WTC11 (cell line): ENCODE measurements at regions of chr9 and their contacts with region 1.

Region 1: DNA sequence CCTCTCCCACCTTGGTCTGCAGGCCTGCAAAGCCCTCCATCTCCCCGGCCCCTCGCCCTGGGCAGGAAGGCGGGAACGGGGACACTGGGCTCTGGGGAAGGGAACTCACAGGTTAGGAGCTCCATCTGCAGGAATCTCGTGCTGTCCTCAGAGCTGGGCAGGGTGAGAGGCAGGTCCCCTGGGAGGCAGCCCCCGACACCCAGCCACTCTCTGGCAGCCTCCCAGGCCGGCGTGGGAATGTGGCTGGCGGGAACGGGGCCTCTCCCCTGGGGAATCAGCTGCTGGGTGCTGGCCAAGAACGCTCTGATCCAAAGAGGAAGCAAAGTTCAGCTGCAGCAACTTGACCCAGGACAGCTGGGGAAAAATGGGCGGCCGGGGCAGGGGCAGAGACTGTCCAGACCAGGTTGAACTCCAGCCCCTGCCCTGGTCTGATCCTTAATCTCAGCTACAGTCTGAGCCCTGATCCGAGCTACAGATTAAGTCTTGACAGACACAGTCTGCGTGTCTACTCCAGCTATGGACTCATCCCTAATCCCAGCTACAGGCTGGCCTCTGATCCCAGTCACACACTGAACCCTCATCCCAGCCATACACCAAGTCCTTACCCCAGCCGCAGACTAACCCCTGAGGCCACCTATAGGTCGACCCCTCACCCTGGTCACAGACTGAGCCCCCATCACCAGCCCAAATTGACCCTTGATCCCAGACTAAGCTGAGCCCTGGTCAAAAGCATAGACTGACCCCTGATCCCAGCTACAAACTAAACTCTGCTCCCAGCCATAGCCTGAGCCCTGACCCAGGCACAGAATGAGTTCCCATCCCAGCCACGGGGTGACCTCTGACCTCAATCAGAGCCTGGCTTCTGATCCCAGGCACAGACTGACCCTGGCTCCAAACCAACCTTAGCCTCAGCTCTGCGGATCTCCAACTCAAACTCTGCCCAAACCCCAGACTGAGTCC is 37.3 kb upstream of the EGFL7 start:
- DNase-seq: no peak
- ATAC-seq: peak; percentile 43
- H3K4me3 Mint-ChIP-seq: no peak overlapping the region
- H3K27ac Mint-ChIP-seq: no peak overlapping the region
- H3K4me1 Mint-ChIP-seq: no peaks in the 10 kb centered on the region
- H3K27me3 Mint-ChIP-seq: no peaks in the 10 kb centered on the region
- CTCF ChIP-seq: no peak

Region 2: DNA sequence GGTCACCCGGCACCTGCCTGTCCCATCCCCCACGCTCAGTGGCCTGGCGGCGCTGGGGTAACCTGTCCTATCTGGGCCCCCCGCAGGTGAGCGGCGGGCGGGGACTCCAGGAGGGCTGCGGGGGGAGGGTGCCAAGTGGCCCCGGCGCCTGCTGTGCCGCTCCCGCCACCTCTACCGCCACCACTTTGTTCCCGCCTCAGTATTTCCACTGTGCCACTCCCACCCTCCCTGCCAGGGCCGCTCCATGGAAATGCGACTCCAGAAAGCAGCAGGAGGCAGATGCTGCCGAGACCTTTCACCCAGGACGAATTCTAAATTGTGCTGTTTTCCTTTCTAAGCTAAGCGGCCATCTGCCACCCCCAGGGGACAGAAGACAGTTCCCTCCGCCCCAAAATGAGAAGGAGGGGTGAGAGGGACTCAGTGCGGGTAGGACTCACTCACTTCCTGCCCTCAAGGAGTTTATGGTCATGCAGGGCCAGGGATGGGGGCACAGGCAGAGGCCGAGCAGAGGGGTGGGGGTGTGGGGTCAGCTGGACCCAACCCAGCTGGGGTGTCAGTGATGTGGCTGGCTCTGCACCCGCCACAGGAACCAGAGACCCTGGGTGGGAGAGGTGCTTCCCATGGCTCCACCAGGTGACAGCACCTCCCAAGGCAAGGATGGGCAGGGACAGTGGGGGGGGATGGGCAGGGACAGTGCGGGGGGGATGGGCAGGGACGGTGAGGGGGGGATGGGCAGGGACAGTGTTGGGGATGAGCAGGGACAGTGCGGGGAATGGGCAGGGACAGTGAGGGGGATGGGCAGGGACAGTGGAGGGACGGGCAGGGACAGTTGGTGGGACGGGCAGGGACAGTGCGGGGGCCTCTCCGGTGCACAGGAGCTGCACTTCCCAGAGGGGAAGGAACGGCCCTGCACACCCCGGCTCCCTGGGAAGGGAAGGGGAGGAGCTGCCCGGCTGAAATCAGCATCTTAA is 97.4 kb before region 1 on chr9:
- CTCF ChIA-PET with region 1: interaction called, 12 read pairs
- POLR2A ChIA-PET with region 1: no interaction called
- DNase-seq: no peak
- ATAC-seq: no peak
- H3K4me3 Mint-ChIP-seq: no peak overlapping the region
- H3K27ac Mint-ChIP-seq: peak overlapping the region; percentile 76; the same call in 1 of the 2 replicates
- H3K4me1 Mint-ChIP-seq: peaks cover 21% of the 10 kb centered on the region
- H3K27me3 Mint-ChIP-seq: no peaks in the 10 kb centered on the region
- CTCF ChIP-seq: no peak

Region 3: GRCh38 chr9:136539427-136540421 is 85.7 kb before region 1 on chr9:
- CTCF ChIA-PET with region 1: interaction called, 13 read pairs
- POLR2A ChIA-PET with region 1: no interaction called
- DNase-seq: peak; percentile 64
- ATAC-seq: peak; percentile 46
- H3K4me3 Mint-ChIP-seq: no peak overlapping the region
- H3K27ac Mint-ChIP-seq: peak overlapping the region; percentile 91
- H3K4me1 Mint-ChIP-seq: peaks cover 25% of the 10 kb centered on the region
- H3K27me3 Mint-ChIP-seq: no peaks in the 10 kb centered on the region
- CTCF ChIP-seq: no peak

Region 4: GRCh38 chr9:136546699-136547501 is 78.5 kb before region 1 on chr9:
- CTCF ChIA-PET with region 1: interaction called, 17 read pairs
- POLR2A ChIA-PET with region 1: interaction called, 3 read pairs
- DNase-seq: no peak
- ATAC-seq: peak; percentile 8
- H3K4me3 Mint-ChIP-seq: peak overlapping the region; percentile 73
- H3K27ac Mint-ChIP-seq: peak overlapping the region; percentile 95
- H3K4me1 Mint-ChIP-seq: peaks cover 50% of the 10 kb centered on the region
- H3K27me3 Mint-ChIP-seq: no peaks in the 10 kb centered on the region
- CTCF ChIP-seq: no peak

Region 5: DNA sequence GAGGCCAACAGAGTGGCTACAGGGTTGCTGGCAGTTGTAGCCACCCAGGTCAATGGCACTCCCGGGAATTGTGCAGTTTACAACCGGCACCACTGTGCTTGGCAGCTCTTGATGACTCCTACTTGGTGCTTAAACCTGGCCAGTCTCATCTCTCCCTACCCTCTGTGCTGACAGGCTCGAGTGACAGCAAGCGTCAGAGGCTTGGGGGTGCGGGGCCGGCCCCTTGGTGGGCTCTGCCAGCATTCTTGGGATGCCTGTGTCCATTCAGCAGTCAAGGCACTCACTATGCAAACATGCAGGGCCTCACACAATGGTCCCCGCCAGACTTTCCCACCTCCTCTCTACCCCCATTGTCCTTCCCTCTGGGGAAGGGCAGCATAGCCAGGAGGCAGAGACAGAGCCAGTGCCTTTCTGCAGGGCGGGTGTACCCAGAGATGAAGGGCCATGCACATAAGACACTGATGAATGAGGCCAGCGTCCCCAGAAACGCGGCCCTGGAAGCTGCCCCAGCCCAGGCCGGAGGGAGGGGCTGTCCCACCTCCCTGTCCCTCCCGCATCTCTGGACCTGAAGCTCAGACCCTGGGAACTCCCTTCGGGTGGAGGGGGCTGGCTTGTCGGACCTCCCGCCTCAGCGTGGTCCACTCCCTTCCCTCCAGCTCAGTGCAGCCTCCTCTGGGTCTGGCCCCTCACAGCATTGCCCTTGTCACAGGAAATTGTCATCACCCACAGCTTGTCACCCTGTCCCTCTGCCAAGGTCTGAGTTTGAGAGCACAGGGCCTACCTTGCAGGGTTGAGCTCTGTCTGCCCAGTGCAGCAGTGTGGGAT is 53.2 kb before region 1 on chr9:
- CTCF ChIA-PET with region 1: interaction called, 14 read pairs
- POLR2A ChIA-PET with region 1: interaction called, 3 read pairs
- DNase-seq: peak; percentile 93
- ATAC-seq: peak; percentile 87
- H3K4me3 Mint-ChIP-seq: peak overlapping the region; percentile 44
- H3K27ac Mint-ChIP-seq: peak overlapping the region; percentile 99
- H3K4me1 Mint-ChIP-seq: peaks cover 55% of the 10 kb centered on the region
- H3K27me3 Mint-ChIP-seq: no peaks in the 10 kb centered on the region; the same call in 1 of the 2 replicates
- CTCF ChIP-seq: no peak

Region 6: GRCh38 chr9:136587145-136587943 is 38.0 kb before region 1 on chr9:
- CTCF ChIA-PET with region 1: interaction called, 15 read pairs
- POLR2A ChIA-PET with region 1: no interaction called
- DNase-seq: peak; percentile 86
- ATAC-seq: peak; percentile 58
- H3K4me3 Mint-ChIP-seq: peak overlapping the region; percentile 29
- H3K27ac Mint-ChIP-seq: no peak overlapping the region; the same call in 1 of the 2 replicates
- H3K4me1 Mint-ChIP-seq: peaks cover 39% of the 10 kb centered on the region
- H3K27me3 Mint-ChIP-seq: no peaks in the 10 kb centered on the region; the same call in 1 of the 2 replicates
- CTCF ChIP-seq: no peak

Region 7: DNA sequence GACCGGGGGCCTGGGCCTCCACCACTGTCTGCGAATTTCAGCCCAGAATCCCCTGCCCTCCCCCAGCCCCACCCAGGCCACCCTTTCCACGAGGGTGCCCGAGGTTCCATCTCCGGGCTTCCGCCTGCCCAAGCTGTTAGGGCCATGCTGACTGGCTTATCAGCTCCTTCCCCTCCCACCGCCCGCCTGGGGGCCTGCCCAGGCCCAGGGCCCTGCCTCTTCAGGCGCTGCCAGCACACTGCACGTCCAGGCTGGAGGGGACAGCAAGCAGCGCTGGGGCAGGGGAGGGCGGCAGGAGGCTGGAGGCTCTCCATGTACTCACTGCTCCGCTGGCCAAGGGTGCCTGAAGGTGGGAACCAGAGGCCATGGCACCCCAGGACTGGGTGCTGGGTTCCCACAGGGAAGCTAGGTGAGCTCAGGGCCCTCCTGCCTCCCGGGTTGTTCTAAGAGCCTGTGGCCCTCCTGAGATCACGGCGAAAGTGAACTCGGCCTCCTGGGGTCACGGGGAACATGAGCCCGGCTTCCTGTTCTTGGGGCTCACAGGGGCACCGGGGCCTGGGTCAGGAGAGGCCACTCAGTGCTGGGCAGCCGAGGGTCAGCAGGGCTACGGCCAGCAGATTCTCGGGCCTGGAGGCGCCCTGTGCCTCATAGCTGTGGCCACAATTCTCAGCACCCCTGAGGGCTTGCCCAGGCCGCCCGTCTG is 20.4 kb before region 1 on chr9:
- CTCF ChIA-PET with region 1: interaction called, 10 read pairs
- POLR2A ChIA-PET with region 1: interaction called, 3 read pairs
- DNase-seq: no peak
- ATAC-seq: 0 out of 2 replicates have a peak, but pooled peaks have one; percentile 9
- H3K4me3 Mint-ChIP-seq: no peak overlapping the region
- H3K27ac Mint-ChIP-seq: no peak overlapping the region
- H3K4me1 Mint-ChIP-seq: peaks cover 34% of the 10 kb centered on the region
- H3K27me3 Mint-ChIP-seq: peaks cover 5% of the 10 kb centered on the region
- CTCF ChIP-seq: no peak

Region 8: GRCh38 chr9:136650648-136651047 is 25.3 kb after region 1 on chr9:
- CTCF ChIA-PET with region 1: no interaction called
- POLR2A ChIA-PET with region 1: no interaction called
- DNase-seq: no peak
- ATAC-seq: no peak
- H3K4me3 Mint-ChIP-seq: no peak overlapping the region
- H3K27ac Mint-ChIP-seq: no peak overlapping the region
- H3K4me1 Mint-ChIP-seq: no peaks in the 10 kb centered on the region
- H3K27me3 Mint-ChIP-seq: no peaks in the 10 kb centered on the region
- CTCF ChIP-seq: no peak